CD4-positive, alpha-beta memory T cell (primary cell): ENCODE measurements at regions of chr6 and their contacts with region 1.

Region 1: GRCh38 chr6:158026054-158026900 is 44.6 kb downstream of the SYNJ2 start:
- DNase-seq: peak; percentile 82 to 95 (median 85)
- H3K4me3 ChIP-seq: peak overlapping the region in 1 of 2 donors; percentile 26
- H3K4me3 Mint-ChIP-seq: peak overlapping the region; percentile 84 to 92 (median 88)
- H3K27ac ChIP-seq: peak overlapping the region; percentile 75
- H3K27ac Mint-ChIP-seq: peak overlapping the region; percentile 97 to 99 (median 98)
- H3K4me1 ChIP-seq: peaks cover 47% of the 10 kb centered on the region
- H3K4me1 Mint-ChIP-seq: peaks cover 25 to 63% (median 32%) of the 10 kb centered on the region in 4 donors
- H3K27me3 ChIP-seq: no peaks in the 10 kb centered on the region
- H3K27me3 Mint-ChIP-seq: no peaks in the 10 kb centered on the region

Region 2: GRCh38 chr6:157764178-157765033 is 261.9 kb before region 1 on chr6:
- CTCF ChIA-PET with region 1: interaction called, 7 read pairs
- POLR2A ChIA-PET with region 1: interaction called, 17 read pairs
- intact Hi-C with region 1: loop called (anchors 2 kb)
- DNase-seq: peak; percentile 86 to 96 (median 91)
- H3K4me3 ChIP-seq: peak overlapping the region; percentile 0 to 49
- H3K4me3 Mint-ChIP-seq: peak overlapping the region; percentile 79 to 88 (median 82)
- H3K27ac ChIP-seq: peak overlapping the region; percentile 49
- H3K27ac Mint-ChIP-seq: peak overlapping the region; percentile 94 to 98 (median 95)
- H3K4me1 ChIP-seq: peaks cover 65% of the 10 kb centered on the region
- H3K4me1 Mint-ChIP-seq: peaks cover 50 to 72% (median 58%) of the 10 kb centered on the region in 4 donors
- H3K27me3 ChIP-seq: no peaks in the 10 kb centered on the region
- H3K27me3 Mint-ChIP-seq: peaks cover 2 to 4% of the 10 kb centered on the region in 2 donors

Region 3: DNA sequence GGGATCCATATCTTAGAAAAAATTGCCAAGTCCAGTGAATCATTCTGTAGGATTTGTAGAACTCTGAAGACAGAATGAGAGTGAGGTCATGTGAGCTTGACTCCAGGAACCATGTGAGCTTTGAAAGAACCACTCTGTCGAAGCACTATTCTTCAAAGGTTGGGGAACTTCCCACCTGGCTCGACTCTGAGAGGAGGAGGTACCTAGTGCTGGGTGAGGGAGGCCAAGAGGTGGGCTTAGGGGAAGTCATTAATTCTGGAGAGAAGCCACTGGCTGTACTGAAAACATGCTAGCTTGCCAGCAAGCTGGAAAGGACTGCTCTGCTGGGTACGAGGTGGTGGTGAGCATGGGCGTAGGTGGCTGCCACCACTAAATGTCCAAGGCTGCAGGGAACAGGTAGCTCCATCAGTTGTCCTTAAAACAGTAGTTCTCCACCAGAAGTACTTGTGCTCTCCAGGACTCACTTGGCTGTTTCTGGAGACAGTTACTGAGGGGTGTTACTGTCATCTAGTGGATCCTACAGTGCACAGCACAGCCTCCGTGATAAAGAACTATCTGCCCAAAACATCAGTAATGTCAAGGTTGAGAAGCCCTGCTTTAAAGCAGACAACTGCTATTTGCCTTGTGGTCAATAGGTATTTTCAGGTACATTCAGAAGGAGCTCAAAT is 79.3 kb before region 1 on chr6:
- CTCF ChIA-PET with region 1: interaction called, 10 read pairs
- POLR2A ChIA-PET with region 1: no interaction called
- intact Hi-C with region 1: no loop called
- DNase-seq: peak in 2 of 5 donors; percentile 11 to 14
- H3K4me3 ChIP-seq: no peak overlapping the region
- H3K4me3 Mint-ChIP-seq: no peak overlapping the region
- H3K27ac ChIP-seq: no peak overlapping the region
- H3K27ac Mint-ChIP-seq: peak overlapping the region in 2 of 7 donors; percentile 48 to 71
- H3K4me1 ChIP-seq: no peaks in the 10 kb centered on the region
- H3K4me1 Mint-ChIP-seq: no peaks in the 10 kb centered on the region
- H3K27me3 ChIP-seq: no peaks in the 10 kb centered on the region
- H3K27me3 Mint-ChIP-seq: peaks cover 0 to 1% of the 10 kb centered on the region in 2 donors

Region 4: DNA sequence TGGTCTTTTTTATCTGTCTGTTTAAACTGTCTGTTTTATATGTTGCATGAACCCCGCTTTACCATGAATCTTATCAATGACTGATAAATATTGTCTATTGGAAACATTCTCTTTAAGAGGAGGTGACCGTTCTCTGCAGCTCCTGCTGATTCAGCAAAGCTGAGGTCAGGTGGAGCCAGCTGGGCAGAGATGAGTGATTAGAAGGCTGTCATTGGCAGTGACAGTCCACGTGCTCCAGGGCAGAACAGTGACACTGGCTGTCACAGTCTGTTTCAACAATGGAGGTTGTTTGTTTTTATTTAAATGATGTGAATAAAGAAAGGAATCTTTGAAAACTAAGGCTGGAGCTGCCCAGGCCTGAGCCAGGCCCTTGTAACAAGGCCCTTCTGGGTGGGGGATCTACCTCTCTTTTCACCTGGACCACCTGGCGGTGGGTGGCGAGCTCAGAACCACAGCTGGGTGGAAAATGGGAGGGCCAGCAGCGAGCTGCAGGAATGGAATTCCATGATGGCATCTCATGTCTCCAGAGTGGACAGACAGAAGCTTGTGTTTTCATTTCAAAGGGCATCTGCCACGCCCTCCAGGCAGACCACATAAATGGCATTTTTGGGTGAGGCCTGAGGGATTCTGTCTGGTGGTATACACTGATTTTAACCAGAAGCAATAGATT is 32.0 kb before region 1 on chr6:
- CTCF ChIA-PET with region 1: interaction called, 14 read pairs
- POLR2A ChIA-PET with region 1: interaction called, 7 read pairs
- intact Hi-C with region 1: no loop called
- DNase-seq: no peak
- H3K4me3 ChIP-seq: no peak overlapping the region
- H3K4me3 Mint-ChIP-seq: no peak overlapping the region
- H3K27ac ChIP-seq: no peak overlapping the region
- H3K27ac Mint-ChIP-seq: peak overlapping the region in 2 of 7 donors; percentile 10 to 52
- H3K4me1 ChIP-seq: peaks cover 32% of the 10 kb centered on the region
- H3K4me1 Mint-ChIP-seq: peaks cover 34 to 70% (median 56%) of the 10 kb centered on the region in 4 donors
- H3K27me3 ChIP-seq: no peaks in the 10 kb centered on the region
- H3K27me3 Mint-ChIP-seq: no peaks in the 10 kb centered on the region

Region 5: GRCh38 chr6:158014505-158015187 is 11.6 kb before region 1 on chr6:
- CTCF ChIA-PET with region 1: interaction called, 93 read pairs
- POLR2A ChIA-PET with region 1: interaction called, 27 read pairs
- intact Hi-C with region 1: loop called (anchors 1 kb)
- DNase-seq: no peak
- H3K4me3 ChIP-seq: no peak overlapping the region
- H3K4me3 Mint-ChIP-seq: peak overlapping the region in 2 of 8 donors; percentile 3 to 5
- H3K27ac ChIP-seq: no peak overlapping the region
- H3K27ac Mint-ChIP-seq: peak overlapping the region; percentile 25 to 78 (median 73)
- H3K4me1 ChIP-seq: peaks cover 38% of the 10 kb centered on the region
- H3K4me1 Mint-ChIP-seq: peaks cover 42 to 60% (median 50%) of the 10 kb centered on the region in 4 donors
- H3K27me3 ChIP-seq: no peaks in the 10 kb centered on the region
- H3K27me3 Mint-ChIP-seq: no peaks in the 10 kb centered on the region

Region 6: GRCh38 chr6:158060455-158061360 is 34.4 kb after region 1 on chr6:
- CTCF ChIA-PET with region 1: interaction called, 28 read pairs
- POLR2A ChIA-PET with region 1: interaction called, 12 read pairs
- intact Hi-C with region 1: loop called (anchors 2 kb)
- DNase-seq: peak in 4 of 5 donors; percentile 11 to 30 (median 24)
- H3K4me3 ChIP-seq: no peak overlapping the region
- H3K4me3 Mint-ChIP-seq: peak overlapping the region in 4 of 8 donors; percentile 18 to 48 (median 31)
- H3K27ac ChIP-seq: peak overlapping the region; percentile 24
- H3K27ac Mint-ChIP-seq: peak overlapping the region; percentile 52 to 95 (median 81)
- H3K4me1 ChIP-seq: peaks cover 47% of the 10 kb centered on the region
- H3K4me1 Mint-ChIP-seq: peaks cover 12 to 39% (median 28%) of the 10 kb centered on the region in 4 donors
- H3K27me3 ChIP-seq: no peaks in the 10 kb centered on the region
- H3K27me3 Mint-ChIP-seq: no peaks in the 10 kb centered on the region

Region 7: GRCh38 chr6:158869826-158870648 is 843.8 kb after region 1 on chr6:
- CTCF ChIA-PET with region 1: no interaction called
- POLR2A ChIA-PET with region 1: no interaction called
- intact Hi-C with region 1: no loop called
- DNase-seq: peak in 3 of 5 donors; percentile 93 to 98 (median 96)
- H3K4me3 ChIP-seq: peak overlapping the region; percentile 55 to 61
- H3K4me3 Mint-ChIP-seq: peak overlapping the region; percentile 89 to 96 (median 92)
- H3K27ac ChIP-seq: peak overlapping the region; percentile 97
- H3K27ac Mint-ChIP-seq: peak overlapping the region; percentile 98 to 100 (median 100)
- H3K4me1 ChIP-seq: peaks cover 20% of the 10 kb centered on the region
- H3K4me1 Mint-ChIP-seq: peaks cover 12 to 39% (median 22%) of the 10 kb centered on the region in 4 donors
- H3K27me3 ChIP-seq: no peaks in the 10 kb centered on the region
- H3K27me3 Mint-ChIP-seq: no peaks in the 10 kb centered on the region